Ascending aorta (tissue), 2 donors: ENCODE measurements at regions of chr14 and their contacts with region 1.

Region 1: DNA sequence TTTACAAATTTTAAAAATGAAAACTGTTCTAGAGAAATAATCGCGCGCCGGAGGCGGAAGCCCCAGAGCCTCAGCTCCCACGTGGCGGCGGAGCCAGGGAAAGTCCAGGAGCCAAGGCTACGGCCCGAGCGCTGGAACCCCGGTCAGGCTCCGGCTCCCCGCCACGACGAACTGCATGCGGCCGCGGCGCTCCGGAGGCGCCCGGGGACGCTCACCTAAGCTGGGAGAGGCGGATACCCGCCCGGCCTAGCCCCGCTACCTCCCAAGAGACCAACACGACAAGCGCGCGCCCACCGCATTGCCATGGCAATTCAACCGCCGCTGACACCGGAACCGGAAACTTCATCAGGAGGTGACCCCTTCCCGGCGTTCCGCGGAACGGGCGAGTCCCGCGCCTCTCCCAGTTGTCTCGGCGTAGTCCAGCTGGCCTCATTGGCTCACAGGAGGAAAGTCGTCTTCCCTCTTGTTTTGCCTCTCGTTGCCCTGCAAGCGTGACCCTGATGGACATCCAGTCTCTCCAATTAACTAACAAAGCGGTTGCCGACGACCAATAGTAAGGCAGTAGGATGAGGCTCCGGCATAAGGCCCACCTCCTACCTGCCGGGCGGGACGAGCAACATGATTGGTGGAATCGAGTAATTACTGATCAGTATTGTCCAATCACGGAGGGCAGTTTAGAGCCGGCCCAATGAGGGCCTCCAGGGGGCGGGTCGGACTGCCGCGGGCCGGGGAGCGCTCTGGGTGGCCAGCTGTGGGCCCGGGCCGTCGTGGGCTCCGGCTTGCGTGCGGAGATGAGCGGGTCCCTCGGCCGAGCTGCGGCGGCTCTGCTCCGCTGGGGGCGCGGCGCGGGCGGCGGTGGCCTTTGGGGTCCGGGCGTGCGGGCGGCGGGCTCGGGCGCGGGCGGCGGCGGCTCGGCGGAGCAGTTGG is at the start of gene GLRX5:
- DNase-seq: peak; percentile 100
- H3K4me3 ChIP-seq: peak within 1 kb of the TSS; percentile 75 to 85
- H3K27ac ChIP-seq: peak within 1 kb of the TSS; percentile 76 to 84
- H3K4me1 ChIP-seq: peaks cover 26 to 46% of the 10 kb centered on the region in 2 donors
- H3K27me3 ChIP-seq: no peaks in the 10 kb centered on the region
- CTCF ChIP-seq: peak in 1 of 3 experiments; percentile 29
- total RNA-seq, gene GLRX5: 24.6 TPM

Region 2: DNA sequence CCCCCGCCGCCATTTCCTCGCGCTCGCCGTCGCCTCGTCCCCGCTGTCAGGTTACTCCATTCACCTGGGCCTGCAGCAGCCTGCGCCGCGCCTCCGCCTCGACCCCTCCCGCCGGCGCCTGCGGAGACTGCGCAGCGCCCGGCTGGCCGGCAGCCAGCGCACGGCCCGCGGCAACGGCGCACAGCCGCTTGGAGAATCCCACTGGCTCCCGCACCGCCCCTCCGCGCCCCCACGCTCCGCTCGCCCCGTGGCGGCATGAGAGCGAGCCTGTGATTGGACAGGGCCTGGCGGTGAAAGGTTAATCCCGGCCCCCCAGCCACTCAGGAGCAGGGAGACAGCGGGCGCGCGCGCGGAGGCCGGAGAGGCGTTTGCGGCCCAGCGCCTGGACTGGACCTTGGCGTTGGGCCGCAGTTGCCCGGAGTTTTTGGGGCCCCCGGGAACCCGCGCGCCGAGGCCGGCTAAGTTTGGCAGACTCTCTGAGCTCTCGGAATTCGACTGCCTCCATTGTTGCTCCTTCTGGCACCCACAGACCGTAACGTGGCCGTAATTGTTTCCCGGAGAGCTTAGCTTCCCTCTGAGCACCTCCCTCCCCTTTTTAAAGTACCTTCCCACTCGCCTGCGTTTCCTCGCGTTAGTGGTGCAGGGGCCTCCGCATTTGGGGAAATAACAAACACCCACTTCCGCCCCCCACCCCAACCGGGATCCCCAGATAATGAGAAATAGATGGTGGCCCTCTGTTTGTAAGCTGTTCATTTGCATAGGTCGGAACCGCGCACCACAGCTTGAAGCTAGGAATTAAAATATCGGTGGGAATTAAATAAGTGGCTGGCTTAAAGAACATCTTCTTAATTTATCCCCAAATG is 377.0 kb before region 1 on chr14 and contains the start of gene DICER1:
- intact Hi-C with region 1: loop called (anchors 2 kb)
- DNase-seq: peak; percentile 79 to 98
- H3K4me3 ChIP-seq: peak within 1 kb of the TSS; percentile 88 to 97
- H3K27ac ChIP-seq: peak within 1 kb of the TSS; percentile 89 to 94
- H3K4me1 ChIP-seq: peaks cover 3 to 16% of the 10 kb centered on the region in 2 donors
- H3K27me3 ChIP-seq: no peaks in the 10 kb centered on the region
- CTCF ChIP-seq: no peak
- total RNA-seq, gene DICER1: 134 TPM

Region 3: GRCh38 chr14:95319312-95320021 is 215.1 kb before region 1 on chr14 and contains the start of gene CLMN:
- intact Hi-C with region 1: loop called (anchors 10 kb)
- DNase-seq: no peak
- H3K4me3 ChIP-seq: peak within 1 kb of the TSS; percentile 88 to 90
- H3K27ac ChIP-seq: peak within 1 kb of the TSS; percentile 23 to 63
- H3K4me1 ChIP-seq: peaks cover 0 to 3% of the 10 kb centered on the region in 2 donors
- H3K27me3 ChIP-seq: no peaks in the 10 kb centered on the region
- CTCF ChIP-seq: no peak
- total RNA-seq, gene CLMN: 4.7 TPM

Region 4: DNA sequence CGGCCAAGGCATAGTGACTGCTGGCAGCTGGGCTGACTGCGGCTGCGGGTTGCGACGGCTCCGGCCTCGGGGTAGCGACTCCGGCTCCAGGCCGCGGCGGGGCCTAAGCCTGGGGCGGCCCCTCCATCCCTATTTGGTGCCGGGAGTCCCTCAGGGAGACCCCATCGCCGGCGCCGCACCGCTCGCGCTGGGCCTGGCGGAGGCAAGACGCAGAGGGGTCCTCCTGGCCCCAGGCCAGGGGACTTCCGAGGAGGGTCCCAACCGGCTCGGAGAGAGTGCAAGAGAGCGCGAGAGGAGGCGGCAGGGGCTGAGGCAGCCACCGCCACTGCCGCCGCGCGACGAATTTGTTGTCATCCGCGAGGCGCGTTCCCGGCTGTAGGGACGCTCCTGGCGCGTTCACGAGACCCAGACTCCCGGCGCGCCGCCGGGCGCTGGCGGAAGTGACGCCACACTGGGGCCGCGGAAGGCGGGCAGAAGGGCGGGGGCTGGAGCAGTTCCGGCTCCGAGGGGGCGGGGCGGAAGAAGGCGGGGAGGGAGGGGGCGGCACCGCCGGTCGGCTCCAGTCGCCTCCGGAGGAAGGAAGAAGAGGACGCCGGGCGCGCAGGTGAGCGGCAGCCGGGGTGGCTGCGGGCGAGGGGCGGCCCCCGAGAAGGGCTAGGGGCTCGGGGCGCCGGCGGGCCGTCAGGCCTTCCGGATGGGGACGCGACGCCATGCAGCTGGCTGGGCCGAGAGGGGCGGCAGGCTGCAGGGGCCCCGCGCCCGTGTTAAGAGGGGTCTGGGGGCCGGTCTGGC is 828.6 kb after region 1 on chr14 and contains the starts of genes ATG2B and GSKIP:
- intact Hi-C with region 1: loop called (anchors 10 kb)
- DNase-seq: peak; percentile 68 to 95
- H3K4me3 ChIP-seq: peak within 1 kb of the TSS; percentile 87 to 92
- H3K27ac ChIP-seq: peak within 1 kb of the TSS; percentile 92 to 93
- H3K4me1 ChIP-seq: peaks cover 9 to 17% of the 10 kb centered on the region in 2 donors
- H3K27me3 ChIP-seq: no peaks in the 10 kb centered on the region
- CTCF ChIP-seq: no peak
- total RNA-seq, gene ATG2B: 15.8 TPM
- total RNA-seq, gene GSKIP: 17.5 TPM

Region 5: GRCh38 chr14:96796851-96797581 is 1262.5 kb after region 1 on chr14 and contains the start of gene VRK1:
- intact Hi-C with region 1: loop called (anchors 5 kb)
- DNase-seq: peak; percentile 83 to 96
- H3K4me3 ChIP-seq: peak within 1 kb of the TSS; percentile 66 to 80
- H3K27ac ChIP-seq: no peak within 1 kb of the TSS
- H3K4me1 ChIP-seq: peaks cover 5 to 9% of the 10 kb centered on the region in 2 donors
- H3K27me3 ChIP-seq: no peaks in the 10 kb centered on the region
- CTCF ChIP-seq: no peak
- total RNA-seq, gene VRK1: 2.4 TPM